ENCODE measurements at regions of chr9 and their contacts with region 1.

Region 1: DNA sequence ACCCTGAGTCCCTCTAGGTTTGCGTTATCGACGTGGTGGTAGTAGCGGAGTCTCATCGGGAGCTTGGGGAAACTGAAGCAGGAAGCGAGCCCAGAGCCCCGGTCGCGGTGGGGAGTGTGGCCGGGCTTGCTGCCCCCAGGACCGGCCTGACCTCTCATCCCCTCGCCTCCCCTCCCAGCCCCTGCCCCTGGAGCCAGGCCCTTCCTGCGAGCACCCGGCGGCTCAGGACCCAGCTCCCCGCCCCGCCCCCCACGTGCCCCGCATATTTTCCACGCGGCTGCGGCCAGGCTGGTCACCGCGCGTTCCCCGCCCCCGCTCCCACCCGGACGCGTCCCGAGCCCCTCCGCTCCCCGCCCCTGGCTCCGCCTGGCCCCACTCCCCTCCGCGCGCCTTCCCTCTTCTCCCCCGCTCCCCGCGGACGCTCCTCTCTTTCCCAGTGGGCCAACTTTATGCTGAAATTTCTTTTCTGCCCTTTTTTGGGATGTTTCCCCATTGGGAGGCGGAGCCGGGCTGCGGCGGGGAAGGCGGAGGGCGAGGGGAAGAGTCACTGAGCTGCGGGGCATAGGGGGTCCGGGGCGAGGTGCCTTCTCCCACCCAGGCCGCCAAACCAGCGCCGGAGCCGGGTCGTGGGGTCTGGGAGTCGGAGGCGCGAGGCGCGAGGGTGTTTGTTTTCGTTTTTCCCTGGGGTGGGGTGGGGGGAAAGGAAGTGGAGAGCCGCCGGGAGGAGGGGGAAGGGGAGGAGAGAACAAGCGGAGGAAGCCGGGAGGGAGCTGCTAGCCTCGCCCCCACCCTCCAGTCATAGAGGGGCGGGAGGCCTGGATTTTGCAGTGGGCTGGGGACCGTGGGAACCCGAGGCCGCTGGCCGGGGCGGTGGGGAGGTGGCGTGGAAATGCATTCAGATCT is 957 bp upstream of the TPM2 start:
- DNase-seq: peak; percentile 69

Region 2: DNA sequence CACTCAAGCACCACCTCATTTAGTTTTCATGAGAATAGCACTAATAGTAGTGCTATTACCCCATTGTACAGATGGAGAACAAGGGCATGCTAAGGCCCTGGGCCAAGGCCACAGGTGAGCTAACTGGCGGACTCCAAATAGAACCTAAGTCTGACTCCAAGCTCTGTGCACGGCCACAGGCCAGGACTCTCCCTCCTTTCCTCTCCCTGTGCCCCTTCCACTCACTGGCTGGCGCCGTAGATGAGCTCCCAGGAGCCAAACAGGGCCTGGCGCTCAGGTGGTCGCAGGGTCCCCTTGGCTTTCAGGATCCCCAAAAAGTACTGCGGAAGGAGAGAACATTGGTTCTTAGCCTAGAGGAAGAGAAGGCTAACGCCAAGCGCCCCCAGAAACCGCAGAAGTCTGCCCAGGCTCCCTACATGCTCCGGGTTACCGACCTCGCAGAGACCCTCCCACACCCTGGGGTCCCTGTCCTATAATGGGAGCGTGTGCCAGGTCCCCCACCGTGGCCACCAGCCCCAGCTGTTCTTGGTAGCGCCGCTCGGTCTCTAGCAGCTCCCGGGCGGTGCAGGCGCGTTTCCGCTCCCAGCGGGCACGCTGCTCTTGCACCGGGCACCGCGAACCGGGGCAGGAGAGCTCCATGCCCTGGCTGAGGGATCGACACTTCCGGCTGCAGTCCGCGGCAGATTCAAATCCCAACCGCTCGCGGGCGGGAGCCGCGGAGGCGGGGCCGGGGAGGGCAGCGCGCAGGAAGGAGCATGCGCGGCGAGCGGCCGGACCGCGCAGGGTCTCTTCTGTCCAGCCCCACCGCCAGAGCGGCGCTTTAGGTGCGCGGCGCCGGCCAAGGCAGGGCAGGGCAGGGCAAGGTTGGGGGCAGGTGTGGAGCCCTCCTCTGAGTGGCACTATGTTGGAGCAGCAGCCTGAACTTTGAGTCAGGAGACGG is 25.9 kb before region 1 on chr9 and contains the start of gene ARHGEF39:
- CTCF ChIA-PET with region 1: no interaction called
- POLR2A ChIA-PET with region 1: interaction called, 14 read pairs
- DNase-seq: peak; percentile 90